ENCODE measurements at regions of chrX and their contacts with region 1.

Region 1: DNA sequence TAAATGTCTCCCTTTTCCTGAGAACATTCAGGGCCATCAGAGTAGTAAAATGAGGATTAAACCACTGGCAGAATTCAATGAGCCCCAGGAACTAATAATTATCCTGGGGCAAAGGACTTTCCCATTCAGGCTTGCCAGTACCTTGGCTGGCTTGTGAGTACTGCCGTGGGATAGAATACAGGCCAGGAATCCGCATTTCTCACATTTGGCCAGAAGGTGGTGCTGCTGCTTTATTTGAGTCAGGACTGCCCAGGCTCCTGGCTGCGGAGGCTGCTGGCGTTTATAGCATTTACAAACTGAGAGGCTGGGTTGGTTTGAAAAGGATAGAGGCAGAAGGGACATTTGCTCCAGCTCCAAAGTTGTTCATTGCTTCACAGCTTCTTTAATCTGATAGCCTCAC is 91.4 kb downstream of the RTL9 start:
- DNase-seq: peak; percentile 31 to 90 (median 80)

Region 2: GRCh38 chrX:110341189-110342035 is 108.6 kb before region 1 on chrX:
- intact Hi-C with region 1: no loop called
- DNase-seq: no peak

Region 3: GRCh38 chrX:110847334-110847733 is 397.3 kb after region 1 on chrX:
- intact Hi-C with region 1: loop called (anchors 5 kb)
- DNase-seq: peak in 10 of 42 donors; percentile 17 to 65 (median 38)

Region 4: GRCh38 chrX:111100186-111100980 is 650.3 kb after region 1 on chrX:
- intact Hi-C with region 1: loop called (anchors 5 kb)
- DNase-seq: peak in 12 of 42 donors; percentile 12 to 48 (median 24)